ENCODE measurements at regions of chr14 and their contacts with region 1.

Region 1: DNA sequence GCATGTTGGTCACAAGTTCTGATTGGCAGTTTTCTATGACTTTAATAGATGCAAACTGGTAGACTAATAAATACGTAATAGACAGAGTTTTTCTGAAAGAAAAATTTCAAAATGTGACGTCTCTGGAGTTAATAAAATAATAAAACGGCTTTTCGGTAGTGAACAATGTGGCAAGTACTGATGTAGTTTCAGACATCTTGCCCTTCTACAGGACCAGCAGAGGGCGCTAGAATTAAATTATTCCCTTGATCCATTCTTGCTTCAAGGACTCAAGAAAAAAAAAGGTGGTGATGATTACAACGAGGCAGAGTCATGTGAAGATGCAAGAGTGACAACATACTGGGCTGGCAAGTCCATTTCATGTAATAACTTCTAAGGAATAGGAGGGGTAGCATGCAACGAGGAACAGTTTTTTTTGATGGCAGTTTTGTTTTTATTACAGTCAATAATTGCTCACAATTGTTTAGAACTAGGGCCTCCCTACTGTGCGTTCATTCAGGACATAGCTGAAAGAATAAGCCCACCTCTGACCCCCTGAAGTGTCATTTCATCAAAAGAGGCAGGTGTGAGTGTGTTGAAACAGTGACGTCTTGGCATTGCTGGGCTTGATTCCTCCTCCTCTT is 101.0 kb upstream of the GZMB start:
- DNase-seq: peak; percentile 71
- H3K4me3 ChIP-seq: no peak overlapping the region
- H3K27ac ChIP-seq: no peak overlapping the region
- H3K4me1 ChIP-seq: no peaks in the 10 kb centered on the region
- H3K27me3 ChIP-seq: no peaks in the 10 kb centered on the region
- CTCF ChIP-seq: peak; percentile 59 to 84 (median 78)
- POLR2A ChIP-seq: no peak

Region 2: GRCh38 chr14:24784981-24785380 is 50.0 kb after region 1 on chr14:
- intact Hi-C with region 1: no loop called
- DNase-seq: no peak
- H3K4me3 ChIP-seq: no peak overlapping the region
- H3K27ac ChIP-seq: no peak overlapping the region
- H3K4me1 ChIP-seq: no peaks in the 10 kb centered on the region
- H3K27me3 ChIP-seq: no peaks in the 10 kb centered on the region
- CTCF ChIP-seq: no peak
- POLR2A ChIP-seq: no peak

Region 3: GRCh38 chr14:24806061-24806678 is 71.2 kb after region 1 on chr14:
- intact Hi-C with region 1: loop called (anchors 10 kb)
- DNase-seq: peak; percentile 86
- H3K4me3 ChIP-seq: no peak overlapping the region
- H3K27ac ChIP-seq: peak overlapping the region; percentile 29 to 30
- H3K4me1 ChIP-seq: peaks cover 2% of the 10 kb centered on the region
- H3K27me3 ChIP-seq: no peaks in the 10 kb centered on the region
- CTCF ChIP-seq: peak; percentile 72 to 88 (median 82)
- POLR2A ChIP-seq: no peak

Region 4: GRCh38 chr14:25042362-25043299 is 307.6 kb after region 1 on chr14:
- intact Hi-C with region 1: loop called (anchors 5 kb)
- DNase-seq: peak; percentile 31
- H3K4me3 ChIP-seq: no peak overlapping the region
- H3K27ac ChIP-seq: peak overlapping the region; percentile 6 to 40
- H3K4me1 ChIP-seq: no peaks in the 10 kb centered on the region
- H3K27me3 ChIP-seq: no peaks in the 10 kb centered on the region
- CTCF ChIP-seq: peak in 3 of 4 experiments; percentile 45 to 75 (median 47)
- POLR2A ChIP-seq: no peak